Activated CD8-positive, alpha-beta T cell treated with anti-CD3 and anti-CD28 coated beads for 36 hours (primary cell): ENCODE measurements at regions of chr11 and their contacts with region 1.

Region 1: GRCh38 chr11:304915-305843 is 2.4 kb upstream of the IFITM2 start:
- DNase-seq: peak; percentile 85
- ATAC-seq: peak; percentile 25
- H3K4me3 Mint-ChIP-seq: no peak overlapping the region
- H3K27ac Mint-ChIP-seq: no peak overlapping the region
- H3K4me1 Mint-ChIP-seq: peaks cover 49% of the 10 kb centered on the region
- H3K27me3 Mint-ChIP-seq: peaks cover 5% of the 10 kb centered on the region
- CTCF ChIP-seq: peak; percentile 86

Region 2: GRCh38 chr11:342328-342727 is 37.1 kb after region 1 on chr11:
- CTCF ChIA-PET with region 1: interaction called, 11 read pairs
- POLR2A ChIA-PET with region 1: interaction called, 3 read pairs
- intact Hi-C with region 1: no loop called
- DNase-seq: no peak
- ATAC-seq: no peak
- H3K4me3 Mint-ChIP-seq: no peak overlapping the region
- H3K27ac Mint-ChIP-seq: no peak overlapping the region
- H3K4me1 Mint-ChIP-seq: peaks cover 16% of the 10 kb centered on the region
- H3K27me3 Mint-ChIP-seq: no peaks in the 10 kb centered on the region
- CTCF ChIP-seq: no peak

Region 3: GRCh38 chr11:363948-364761 is 59.0 kb after region 1 on chr11:
- CTCF ChIA-PET with region 1: interaction called, 42 read pairs
- POLR2A ChIA-PET with region 1: interaction called, 3 read pairs
- intact Hi-C with region 1: loop called (anchors 2 kb)
- DNase-seq: peak; percentile 72
- ATAC-seq: peak; percentile 81
- H3K4me3 Mint-ChIP-seq: no peak overlapping the region
- H3K27ac Mint-ChIP-seq: no peak overlapping the region
- H3K4me1 Mint-ChIP-seq: peaks cover 7% of the 10 kb centered on the region
- H3K27me3 Mint-ChIP-seq: peaks cover 27% of the 10 kb centered on the region
- CTCF ChIP-seq: peak; percentile 65